Tibial artery (tissue), 4 donors: ENCODE measurements at regions of chr13 and their contacts with region 1.

Region 1: GRCh38 chr13:100514788-100515409 is 73.7 kb downstream of the GGACT start:
- DNase-seq: peak; percentile 74 to 86
- H3K4me3 ChIP-seq: no peak overlapping the region
- H3K27ac ChIP-seq: no peak overlapping the region
- H3K4me1 ChIP-seq: no peaks in the 10 kb centered on the region
- H3K27me3 ChIP-seq: no peaks in the 10 kb centered on the region
- CTCF ChIP-seq: peak; percentile 81 to 90

Region 2: GRCh38 chr13:99666146-99666805 is 848.6 kb before region 1 on chr13:
- intact Hi-C with region 1: loop called (anchors 5 kb)
- DNase-seq: no peak
- H3K4me3 ChIP-seq: no peak overlapping the region
- H3K27ac ChIP-seq: no peak overlapping the region
- H3K4me1 ChIP-seq: no peaks in the 10 kb centered on the region
- H3K27me3 ChIP-seq: no peaks in the 10 kb centered on the region
- CTCF ChIP-seq: no peak

Region 3: GRCh38 chr13:99916366-99917103 is 598.4 kb before region 1 on chr13:
- intact Hi-C with region 1: loop called (anchors 10 kb)
- DNase-seq: no peak
- H3K4me3 ChIP-seq: no peak overlapping the region
- H3K27ac ChIP-seq: no peak overlapping the region
- H3K4me1 ChIP-seq: no peaks in the 10 kb centered on the region
- H3K27me3 ChIP-seq: peaks cover 0 to 18% of the 10 kb centered on the region in 2 donors
- CTCF ChIP-seq: peak; percentile 84 to 86

Region 4: GRCh38 chr13:100895651-100896050 is 380.8 kb after region 1 on chr13:
- intact Hi-C with region 1: no loop called
- DNase-seq: no peak
- H3K4me3 ChIP-seq: no peak overlapping the region
- H3K27ac ChIP-seq: no peak overlapping the region
- H3K4me1 ChIP-seq: no peaks in the 10 kb centered on the region
- H3K27me3 ChIP-seq: no peaks in the 10 kb centered on the region
- CTCF ChIP-seq: no peak